Activated CD8-positive, alpha-beta T cell treated with anti-CD3 and anti-CD28 coated beads for 36 hours (primary cell): ENCODE measurements at regions of chr20 and their contacts with region 1.

Region 1: GRCh38 chr20:49936153-49937027 is at the start of gene RNF114:
- DNase-seq: peak; percentile 92
- ATAC-seq: peak; percentile 96
- H3K4me3 Mint-ChIP-seq: peak within 1 kb of the TSS; percentile 90
- H3K27ac Mint-ChIP-seq: peak within 1 kb of the TSS; percentile 91
- H3K4me1 Mint-ChIP-seq: peaks cover 36% of the 10 kb centered on the region
- H3K27me3 Mint-ChIP-seq: no peaks in the 10 kb centered on the region
- CTCF ChIP-seq: no peak
- total RNA-seq, gene RNF114: 68.4 to 70.5 TPM

Region 2: GRCh38 chr20:49758781-49759180 is 177.6 kb before region 1 on chr20:
- CTCF ChIA-PET with region 1: no interaction called
- POLR2A ChIA-PET with region 1: no interaction called
- intact Hi-C with region 1: no loop called
- DNase-seq: no peak
- ATAC-seq: no peak
- H3K4me3 Mint-ChIP-seq: no peak overlapping the region
- H3K27ac Mint-ChIP-seq: no peak overlapping the region
- H3K4me1 Mint-ChIP-seq: no peaks in the 10 kb centered on the region
- H3K27me3 Mint-ChIP-seq: peaks cover 24% of the 10 kb centered on the region
- CTCF ChIP-seq: no peak

Region 3: GRCh38 chr20:49896204-49896979 is 40.0 kb before region 1 on chr20:
- CTCF ChIA-PET with region 1: no interaction called
- POLR2A ChIA-PET with region 1: no interaction called
- intact Hi-C with region 1: no loop called
- DNase-seq: no peak
- ATAC-seq: no peak
- H3K4me3 Mint-ChIP-seq: no peak overlapping the region
- H3K27ac Mint-ChIP-seq: no peak overlapping the region
- H3K4me1 Mint-ChIP-seq: peaks cover 28% of the 10 kb centered on the region
- H3K27me3 Mint-ChIP-seq: no peaks in the 10 kb centered on the region
- CTCF ChIP-seq: no peak

Region 4: GRCh38 chr20:49915378-49916145 is 20.8 kb before region 1 on chr20 and contains the start of gene SPATA2:
- CTCF ChIA-PET with region 1: interaction called, 11 read pairs
- POLR2A ChIA-PET with region 1: interaction called, 22 read pairs
- intact Hi-C with region 1: no loop called
- DNase-seq: peak; percentile 97
- ATAC-seq: peak; percentile 82
- H3K4me3 Mint-ChIP-seq: peak within 1 kb of the TSS; percentile 95
- H3K27ac Mint-ChIP-seq: peak within 1 kb of the TSS; percentile 100
- H3K4me1 Mint-ChIP-seq: peaks cover 30% of the 10 kb centered on the region
- H3K27me3 Mint-ChIP-seq: no peaks in the 10 kb centered on the region
- CTCF ChIP-seq: no peak
- total RNA-seq, gene SPATA2: 6.2 to 7.4 TPM

Region 5: DNA sequence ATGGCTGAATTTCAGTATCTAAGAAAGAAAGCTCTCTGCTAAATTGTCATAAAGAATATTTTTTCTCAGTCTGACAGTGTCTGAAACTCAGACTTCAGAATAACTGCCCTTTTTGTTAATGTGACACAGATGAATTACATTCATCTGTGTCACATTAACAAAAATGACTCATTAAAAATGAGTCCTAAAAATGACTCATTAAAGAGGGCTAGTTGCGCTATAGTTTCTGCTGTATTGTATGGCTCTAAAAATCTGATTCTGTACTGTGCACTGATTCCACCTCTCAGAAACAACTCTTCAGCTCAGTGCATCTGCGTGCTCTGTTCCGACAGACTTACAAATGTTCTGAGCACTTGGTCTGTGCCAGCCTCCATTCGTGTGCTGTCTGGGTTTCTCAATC is 14.8 kb after region 1 on chr20:
- CTCF ChIA-PET with region 1: interaction called, 3 read pairs
- POLR2A ChIA-PET with region 1: interaction called, 18 read pairs
- intact Hi-C with region 1: no loop called
- DNase-seq: no peak
- ATAC-seq: peak; percentile 80
- H3K4me3 Mint-ChIP-seq: no peak overlapping the region
- H3K27ac Mint-ChIP-seq: peak overlapping the region; percentile 61
- H3K4me1 Mint-ChIP-seq: peaks cover 8% of the 10 kb centered on the region
- H3K27me3 Mint-ChIP-seq: no peaks in the 10 kb centered on the region
- CTCF ChIP-seq: no peak

Region 6: DNA sequence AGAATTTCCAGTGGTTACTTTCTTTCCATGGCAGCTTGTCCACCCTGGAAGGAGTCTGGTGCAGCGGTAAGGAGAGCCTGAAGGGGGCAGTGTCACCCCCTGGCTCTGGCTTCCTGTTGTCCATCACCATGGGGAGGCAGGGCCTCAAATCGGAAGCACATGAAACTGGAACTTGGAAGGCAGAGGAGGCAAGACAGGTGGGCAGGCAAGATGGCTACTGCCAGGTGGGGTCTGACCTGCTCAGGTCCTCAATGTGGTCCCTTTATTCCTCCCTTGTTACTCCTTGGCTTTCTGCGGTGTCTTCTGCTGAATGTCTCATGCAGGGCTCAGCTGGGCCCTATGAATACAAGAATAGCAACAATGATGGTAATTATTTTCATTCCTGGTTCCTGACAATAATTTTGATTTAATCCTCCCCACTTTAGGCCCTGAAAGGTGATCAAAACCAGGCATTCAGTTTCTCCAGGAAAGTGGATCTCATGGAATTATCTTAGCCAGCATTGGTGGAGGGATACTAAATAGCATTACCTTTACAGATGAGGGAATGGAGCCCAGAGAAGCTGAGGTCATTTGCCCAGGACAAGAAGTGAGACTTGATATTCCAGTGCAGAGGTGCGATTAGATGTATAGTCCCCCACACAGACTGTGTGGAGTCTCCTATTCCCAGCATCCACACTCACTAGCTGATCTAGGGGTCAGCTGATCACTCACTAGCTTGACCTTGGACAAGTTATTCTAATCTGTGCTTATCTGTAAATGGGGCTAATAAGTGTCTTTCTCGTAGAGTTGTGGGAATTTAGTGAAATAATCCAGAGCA is 28.8 kb after region 1 on chr20:
- CTCF ChIA-PET with region 1: interaction called, 10 read pairs
- POLR2A ChIA-PET with region 1: no interaction called
- intact Hi-C with region 1: no loop called
- DNase-seq: peak; percentile 47
- ATAC-seq: peak; percentile 79
- H3K4me3 Mint-ChIP-seq: no peak overlapping the region
- H3K27ac Mint-ChIP-seq: no peak overlapping the region
- H3K4me1 Mint-ChIP-seq: no peaks in the 10 kb centered on the region
- H3K27me3 Mint-ChIP-seq: no peaks in the 10 kb centered on the region
- CTCF ChIP-seq: peak; percentile 68